ENCODE measurements at regions of chr4 and their contacts with region 1.

Region 1: GRCh38 chr4:78951862-78952472 is 12.7 kb upstream of the PAQR3 start:
- DNase-seq: peak in 1 of 5 donors; percentile 28
- H3K4me3 ChIP-seq: no peak overlapping the region
- H3K27ac ChIP-seq: no peak overlapping the region
- H3K4me1 ChIP-seq: no peaks in the 10 kb centered on the region
- H3K27me3 ChIP-seq: no peaks in the 10 kb centered on the region
- CTCF ChIP-seq: peak in 2 of 3 donors; percentile 66 to 72
- EP300 ChIP-seq: no peak
- POLR2A ChIP-seq: no peak

Region 2: GRCh38 chr4:79576429-79576753 is 624.4 kb after region 1 on chr4:
- intact Hi-C with region 1: loop called in 1 of 4 experiments (anchors 10 kb)
- DNase-seq: no peak
- H3K4me3 ChIP-seq: no peak overlapping the region
- H3K27ac ChIP-seq: no peak overlapping the region
- H3K4me1 ChIP-seq: peaks cover 1% of the 10 kb centered on the region
- H3K27me3 ChIP-seq: no peaks in the 10 kb centered on the region
- CTCF ChIP-seq: no peak
- EP300 ChIP-seq: no peak
- POLR2A ChIP-seq: no peak

Region 3: DNA sequence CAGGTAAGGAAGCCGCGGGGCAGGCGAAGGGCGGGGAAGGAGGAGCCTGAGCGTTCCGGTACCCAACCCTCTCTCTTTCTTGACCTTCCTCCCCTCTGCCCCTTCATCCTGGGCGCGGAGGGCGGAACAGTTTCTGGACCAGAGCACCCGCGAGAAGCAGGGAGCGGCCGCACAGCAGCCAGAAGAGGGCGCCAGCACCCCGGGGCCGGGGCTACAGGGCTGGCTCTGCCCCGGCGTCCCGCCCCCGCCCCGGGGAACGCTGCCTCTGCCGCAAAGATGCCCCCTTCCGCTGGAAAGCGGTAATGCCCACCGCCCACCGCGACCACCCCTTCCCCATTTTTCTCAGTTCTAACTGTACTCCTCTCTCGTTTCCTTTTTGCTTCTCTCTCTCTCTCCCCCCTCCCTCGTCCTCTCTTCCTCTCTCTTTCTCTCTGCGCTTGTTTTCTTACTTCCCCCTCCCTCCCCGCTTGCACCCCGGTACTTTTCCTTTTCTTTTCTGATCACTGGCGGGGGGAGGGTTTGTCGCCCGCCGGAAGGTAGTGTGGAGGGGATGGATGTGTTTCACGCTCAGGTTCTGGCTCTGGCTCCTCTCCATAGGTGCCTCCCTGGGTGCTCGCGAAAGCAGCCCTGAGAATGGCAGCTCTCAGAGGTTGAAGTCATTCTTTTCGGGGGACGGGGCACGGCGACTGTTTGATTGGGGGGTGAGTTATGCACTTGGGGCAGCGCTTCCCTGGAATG is 1232.3 kb after region 1 on chr4:
- intact Hi-C with region 1: loop called in 1 of 4 experiments (anchors 10 kb)
- DNase-seq: peak; percentile 91 to 96 (median 93)
- H3K4me3 ChIP-seq: peak overlapping the region; percentile 78
- H3K27ac ChIP-seq: peak overlapping the region; percentile 73 to 86
- H3K4me1 ChIP-seq: peaks cover 14% of the 10 kb centered on the region
- H3K27me3 ChIP-seq: no peaks in the 10 kb centered on the region
- CTCF ChIP-seq: peak; percentile 85 to 99 (median 85)
- EP300 ChIP-seq: no peak
- POLR2A ChIP-seq: no peak

Region 4: DNA sequence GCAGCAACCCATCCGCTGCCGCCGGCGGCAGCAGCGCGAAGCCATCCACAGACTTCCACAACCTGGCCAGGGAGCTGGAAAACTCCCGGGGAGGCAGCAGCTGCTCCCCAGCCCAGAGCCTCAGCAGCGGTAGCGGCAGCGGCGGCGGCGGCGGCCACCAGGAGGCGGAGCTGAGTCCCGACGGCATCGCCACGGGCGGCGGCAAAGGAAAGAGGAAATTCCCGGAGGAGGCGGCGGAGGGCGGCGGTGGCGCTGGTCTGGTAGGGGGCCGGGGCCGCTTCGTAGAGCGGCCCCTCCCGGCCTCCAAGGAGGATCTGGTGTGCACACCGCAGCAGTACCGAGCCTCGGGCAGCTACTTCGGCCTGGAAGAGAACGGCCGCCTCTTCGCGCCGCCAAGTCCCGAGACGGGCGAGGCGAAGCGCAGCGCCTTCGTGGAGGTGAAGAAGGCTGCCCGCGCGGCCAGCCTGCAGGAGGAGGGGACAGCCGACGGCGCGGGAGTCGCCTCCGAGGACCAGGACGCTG is 1250.3 kb after region 1 on chr4:
- intact Hi-C with region 1: loop called in 3 of 4 experiments (anchors 5 to 10 kb)
- DNase-seq: peak; percentile 86 to 94 (median 88)
- H3K4me3 ChIP-seq: peak overlapping the region; percentile 68
- H3K27ac ChIP-seq: peak overlapping the region; percentile 72 to 75
- H3K4me1 ChIP-seq: peaks cover 5% of the 10 kb centered on the region
- H3K27me3 ChIP-seq: no peaks in the 10 kb centered on the region
- CTCF ChIP-seq: peak; percentile 66 to 89 (median 84)
- EP300 ChIP-seq: no peak
- POLR2A ChIP-seq: no peak

Region 5: DNA sequence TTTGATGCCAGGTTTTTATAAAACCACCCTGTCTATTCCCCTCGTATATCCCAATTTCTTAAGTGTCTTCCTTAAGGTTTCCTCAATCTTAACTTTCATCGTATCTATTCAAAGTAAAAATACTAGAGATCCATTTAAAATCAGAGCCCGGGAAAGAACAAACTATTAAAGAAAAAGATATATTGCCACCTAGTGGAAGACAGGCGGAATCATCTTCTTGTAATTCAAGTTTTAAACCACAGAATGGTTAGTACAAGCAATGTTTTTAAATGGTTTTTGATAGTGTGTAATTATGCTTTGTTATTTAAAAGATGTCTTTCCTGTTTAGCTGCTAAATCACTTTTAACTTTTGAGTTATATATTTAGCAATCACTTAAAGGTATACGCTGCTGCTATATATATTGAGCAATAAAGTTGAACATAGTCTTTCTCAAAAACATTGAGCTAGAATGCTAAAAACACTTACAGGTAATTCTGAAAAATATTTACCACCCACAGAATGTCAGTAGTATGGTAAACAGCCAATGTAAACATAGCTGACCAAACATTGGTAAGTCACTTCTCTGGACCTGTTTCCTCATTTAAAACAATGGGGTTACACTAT is 1263.6 kb after region 1 on chr4:
- intact Hi-C with region 1: loop called in 1 of 4 experiments (anchors 10 kb)
- DNase-seq: no peak
- H3K4me3 ChIP-seq: no peak overlapping the region
- H3K27ac ChIP-seq: no peak overlapping the region
- H3K4me1 ChIP-seq: no peaks in the 10 kb centered on the region
- H3K27me3 ChIP-seq: no peaks in the 10 kb centered on the region
- CTCF ChIP-seq: peak in 2 of 3 donors; percentile 19 to 39
- EP300 ChIP-seq: no peak
- POLR2A ChIP-seq: no peak

Measured in ovary (tissue), 10 donors.